ENCODE measurements at regions of chr1 and their contacts with region 1.

Region 1: DNA sequence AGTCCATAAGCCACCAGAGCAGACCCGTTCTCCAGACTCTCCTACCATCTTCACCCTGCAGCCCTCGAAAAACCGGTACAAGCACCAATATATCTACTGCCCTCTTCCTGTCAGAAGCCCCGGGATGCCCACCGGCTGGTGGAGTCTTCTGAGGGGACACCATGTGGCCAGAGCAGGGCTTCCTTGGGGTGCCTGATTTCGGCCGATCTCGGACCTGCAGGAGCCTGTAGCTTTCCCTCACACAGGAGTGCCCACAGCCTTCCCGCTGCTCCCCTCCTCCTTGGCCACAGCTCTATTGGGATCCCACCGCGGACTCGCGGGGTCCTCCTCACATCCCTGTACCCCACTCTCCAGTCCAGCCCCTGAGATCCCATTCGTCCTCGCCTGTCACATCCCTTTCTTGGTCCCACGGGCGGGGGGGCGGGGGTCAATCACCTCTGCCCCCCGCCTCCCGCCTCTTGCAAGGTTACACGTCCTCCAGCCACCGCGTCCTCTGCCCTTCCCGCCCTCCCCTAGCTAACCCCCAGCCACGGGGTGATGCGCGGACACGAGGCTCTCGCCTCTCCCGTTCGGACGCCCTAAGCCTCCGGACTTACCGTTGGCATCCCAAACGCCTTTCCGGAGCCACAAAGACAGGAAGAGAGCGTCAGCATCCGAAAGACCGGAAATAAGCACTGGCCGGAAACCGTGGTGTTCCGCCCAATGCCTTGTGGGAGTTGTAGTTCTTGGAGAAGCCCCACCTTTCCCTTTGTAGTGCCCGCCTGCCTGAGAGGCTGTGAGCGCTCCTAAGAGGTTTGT is at the start of gene SSR2:
- DNase-seq: peak; percentile 65 to 92 (median 84)
- ATAC-seq: peak; percentile 99 to 100
- H3K4me3 Mint-ChIP-seq: peak within 1 kb of the TSS; percentile 90 to 99 (median 98)
- H3K27ac Mint-ChIP-seq: peak within 1 kb of the TSS; percentile 87 to 98 (median 98)
- H3K4me1 Mint-ChIP-seq: peaks cover 16 to 33% (median 24%) of the 10 kb centered on the region in 4 donors
- H3K27me3 Mint-ChIP-seq: peaks cover 0 to 5% (median 4%) of the 10 kb centered on the region in 5 donors
- polyA plus RNA-seq, gene SSR2: 345 to 396 (median 347) TPM

Region 2: DNA sequence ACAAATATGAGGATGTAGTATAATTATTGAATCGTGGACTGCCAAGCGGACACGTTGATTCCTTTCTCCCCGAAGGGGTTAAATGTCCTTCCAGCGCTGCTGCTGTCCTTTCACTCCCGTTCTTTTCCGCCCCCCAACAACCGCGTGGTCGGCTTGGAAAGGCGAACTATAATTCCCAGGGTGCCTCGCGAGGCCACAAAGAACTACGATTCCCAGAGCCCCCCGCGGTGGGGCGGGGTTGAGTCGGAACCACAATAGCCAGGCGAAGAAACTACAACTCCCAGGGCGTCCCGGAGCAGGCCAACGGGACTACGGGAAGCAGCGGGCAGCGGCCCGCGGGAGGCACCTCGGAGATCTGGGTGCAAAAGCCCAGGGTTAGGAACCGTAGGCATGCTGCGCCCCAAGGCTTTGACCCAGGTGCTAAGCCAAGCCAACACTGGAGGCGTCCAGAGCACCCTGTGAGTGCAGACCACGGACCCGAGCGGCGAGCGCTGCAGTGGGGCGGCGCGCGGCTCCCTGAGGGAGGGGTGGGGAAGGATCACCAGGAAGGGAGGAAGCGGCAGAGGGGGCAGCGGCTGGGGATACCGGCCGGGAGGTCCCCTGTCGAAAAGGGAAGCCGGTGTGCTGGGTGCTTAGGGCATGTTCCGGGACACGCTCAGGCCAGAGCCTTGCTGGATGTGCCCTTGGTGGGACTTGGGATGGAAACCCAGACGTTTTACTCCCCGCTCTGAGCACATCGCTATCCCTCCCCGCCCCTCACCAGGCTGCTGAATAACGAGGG is 34.2 kb after region 1 on chr1 and contains the start of gene LAMTOR2:
- POLR2A ChIA-PET with region 1: interaction called, 12 read pairs
- DNase-seq: peak; percentile 89 to 96 (median 93)
- ATAC-seq: peak; percentile 79 to 83
- H3K4me3 Mint-ChIP-seq: peak within 1 kb of the TSS; percentile 90 to 100 (median 96)
- H3K27ac Mint-ChIP-seq: peak within 1 kb of the TSS; percentile 81 to 97 (median 94)
- H3K4me1 Mint-ChIP-seq: peaks cover 20 to 39% (median 36%) of the 10 kb centered on the region in 4 donors
- H3K27me3 Mint-ChIP-seq: no peaks in the 10 kb centered on the region
- polyA plus RNA-seq, gene LAMTOR2: 89.1 to 102 (median 96.1) TPM